Activated CD4-positive, alpha-beta memory T cell treated with anti-CD3 and anti-CD28 coated beads for 36 hours (primary cell): ENCODE measurements at regions of chr19 and their contacts with region 1.

Region 1: DNA sequence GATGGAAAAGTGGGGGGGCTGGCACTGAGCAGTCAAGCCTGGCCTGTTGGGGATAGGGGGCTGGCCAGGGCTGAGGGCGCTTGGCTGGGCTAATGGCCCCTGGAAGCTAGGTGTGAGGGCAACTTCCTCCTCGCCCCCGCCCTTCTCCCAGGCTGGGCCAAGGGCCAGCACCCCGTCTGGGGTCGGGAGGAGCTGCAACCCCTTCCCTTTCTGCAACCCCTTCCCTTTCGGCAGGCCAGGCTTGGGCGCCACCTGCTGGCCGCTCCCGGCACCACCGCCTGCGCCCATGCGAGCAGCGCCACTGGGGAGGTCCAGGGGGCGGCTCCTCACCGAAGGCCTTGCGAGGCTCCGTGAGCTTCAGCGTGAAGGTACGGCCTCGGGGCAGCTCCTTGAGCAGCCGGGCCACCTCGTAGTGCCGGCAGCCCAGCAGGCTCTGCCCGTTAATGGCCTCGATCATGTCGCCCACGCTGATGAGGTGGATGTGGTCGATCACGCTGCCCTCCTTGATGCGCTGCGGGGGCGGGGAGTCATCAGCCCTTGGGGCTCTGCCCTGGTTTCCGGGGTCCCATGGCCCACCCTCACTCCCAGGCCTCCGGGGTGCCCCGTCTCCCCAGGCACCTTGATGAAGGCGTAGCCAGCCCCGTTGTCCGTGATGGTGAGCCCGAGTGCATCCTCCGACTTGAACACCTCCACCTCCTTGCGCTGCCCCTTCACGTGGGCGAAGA is 5.0 kb upstream of the PTGER1 start:
- DNase-seq: peak; percentile 83
- H3K4me3 Mint-ChIP-seq: no peak overlapping the region
- H3K27ac Mint-ChIP-seq: no peak overlapping the region
- H3K4me1 Mint-ChIP-seq: peaks cover 18% of the 10 kb centered on the region
- H3K27me3 Mint-ChIP-seq: peaks cover 2% of the 10 kb centered on the region

Region 2: DNA sequence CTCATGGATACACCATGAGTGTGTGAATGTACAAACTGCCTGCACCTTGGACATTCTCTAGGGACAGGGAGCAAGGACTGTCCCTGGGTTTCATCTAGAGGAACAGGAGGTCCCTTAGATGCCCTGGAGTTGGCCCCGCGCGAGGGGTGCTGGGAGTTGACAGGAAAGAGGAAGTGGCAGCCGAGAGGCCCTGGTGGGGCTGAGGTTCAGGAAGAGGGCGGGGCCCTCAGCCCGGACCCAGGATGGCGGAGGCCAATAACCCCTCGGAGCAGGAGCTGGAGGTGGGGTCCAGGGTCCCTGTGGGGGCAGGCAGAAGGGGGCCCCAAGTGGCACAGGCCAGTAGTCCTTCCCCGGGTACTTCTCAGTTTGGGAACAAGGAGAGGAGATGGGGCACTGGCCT is 40.1 kb before region 1 on chr19:
- CTCF ChIA-PET with region 1: interaction called, 17 read pairs
- POLR2A ChIA-PET with region 1: interaction called, 3 read pairs
- intact Hi-C with region 1: no loop called
- DNase-seq: peak; percentile 90
- H3K4me3 Mint-ChIP-seq: peak overlapping the region; percentile 84
- H3K27ac Mint-ChIP-seq: peak overlapping the region; percentile 88
- H3K4me1 Mint-ChIP-seq: peaks cover 39% of the 10 kb centered on the region
- H3K27me3 Mint-ChIP-seq: no peaks in the 10 kb centered on the region

Region 3: DNA sequence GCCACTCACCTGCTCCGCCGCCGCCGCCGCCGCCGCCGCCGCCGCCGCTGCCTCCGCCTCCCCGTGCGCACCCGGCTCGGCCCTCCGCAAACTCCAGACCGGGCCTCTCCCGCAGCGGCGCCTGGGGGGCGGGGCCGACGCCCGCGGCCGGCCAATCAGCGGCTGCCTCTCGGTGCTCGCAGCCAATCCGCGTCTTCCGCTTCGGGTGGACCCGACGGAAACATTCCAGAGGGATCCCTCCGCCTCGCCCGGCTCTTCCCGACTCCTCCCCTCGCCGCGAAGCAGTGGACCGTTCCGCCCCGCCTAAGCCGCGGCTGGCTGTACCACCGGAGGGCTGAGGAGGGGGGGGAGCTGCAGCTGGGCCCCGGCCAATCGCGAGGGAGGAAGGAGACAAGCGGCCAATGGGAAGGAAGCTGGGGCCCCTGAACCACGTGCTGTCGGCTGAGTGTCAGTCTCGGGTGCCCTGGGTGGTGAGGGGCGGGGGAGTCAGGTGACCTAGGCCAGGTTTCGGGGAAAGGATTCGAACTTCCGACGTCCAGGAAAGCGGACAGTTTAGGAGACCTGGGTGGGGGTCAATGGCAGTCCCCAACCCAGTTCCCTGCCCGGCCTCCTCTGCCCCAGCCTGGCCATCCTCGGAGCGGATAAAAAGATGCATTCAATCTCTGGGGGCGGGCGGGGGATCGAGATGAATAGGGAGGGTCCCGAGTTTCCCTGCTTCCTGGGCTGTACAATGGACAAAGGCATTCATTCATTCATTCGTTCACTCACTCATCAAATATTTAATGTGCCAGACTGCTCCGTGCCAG is 16.1 kb after region 1 on chr19 and contains the start of gene GIPC1:
- CTCF ChIA-PET with region 1: interaction called, 24 read pairs
- POLR2A ChIA-PET with region 1: interaction called, 4 read pairs
- intact Hi-C with region 1: no loop called
- DNase-seq: peak; percentile 89
- H3K4me3 Mint-ChIP-seq: peak within 1 kb of the TSS; percentile 78
- H3K27ac Mint-ChIP-seq: peak within 1 kb of the TSS; percentile 66
- H3K4me1 Mint-ChIP-seq: peaks cover 17% of the 10 kb centered on the region
- H3K27me3 Mint-ChIP-seq: no peaks in the 10 kb centered on the region
- total RNA-seq, gene GIPC1: 31.5 to 35.2 TPM